ENCODE measurements at regions of chr1 and their contacts with region 1.

Region 1: GRCh38 chr1:18299441-18300338 is 181.0 kb upstream of the KLHDC7A start:
- DNase-seq: peak in 1 of 5 donors; percentile 9
- ATAC-seq: no peak
- H3K4me3 ChIP-seq: no peak overlapping the region
- H3K27ac ChIP-seq: no peak overlapping the region
- H3K4me1 ChIP-seq: no peaks in the 10 kb centered on the region
- H3K27me3 ChIP-seq: peaks cover 0 to 62% (median 20%) of the 10 kb centered on the region in 9 donors
- CTCF ChIP-seq: peak in 11 of 12 donors; percentile 31 to 68 (median 56)
- POLR2A ChIP-seq: no peak

Region 2: GRCh38 chr1:18575620-18576019 is 275.9 kb after region 1 on chr1:
- intact Hi-C with region 1: loop called in 2 of 10 experiments (anchors 10 kb)
- DNase-seq: peak in 2 of 5 donors; percentile 56 to 78
- ATAC-seq: peak in 1 of 4 donors; percentile 65
- H3K4me3 ChIP-seq: no peak overlapping the region
- H3K27ac ChIP-seq: no peak overlapping the region
- H3K4me1 ChIP-seq: no peaks in the 10 kb centered on the region
- H3K27me3 ChIP-seq: peaks cover 0 to 51% (median 7%) of the 10 kb centered on the region in 9 donors
- CTCF ChIP-seq: peak in 11 of 12 donors; percentile 14 to 83 (median 62)
- POLR2A ChIP-seq: no peak

Region 3: GRCh38 chr1:18597160-18598042 is 297.7 kb after region 1 on chr1:
- intact Hi-C with region 1: no loop called
- DNase-seq: peak in 4 of 5 donors; percentile 28 to 50 (median 36)
- ATAC-seq: peak in 3 of 4 donors; percentile 80 to 83 (median 81)
- H3K4me3 ChIP-seq: no peak overlapping the region
- H3K27ac ChIP-seq: no peak overlapping the region
- H3K4me1 ChIP-seq: peaks cover 0 to 3% (median 0%) of the 10 kb centered on the region in 12 donors
- H3K27me3 ChIP-seq: peaks cover 2 to 78% (median 19%) of the 10 kb centered on the region in 9 donors
- CTCF ChIP-seq: peak; percentile 80 to 98 (median 90)
- POLR2A ChIP-seq: no peak